Activated B cell treated with CpG ODN at 0.5 μM for 24 hours (primary cell): ENCODE measurements at regions of chr11 and their contacts with region 1.

Region 1: GRCh38 chr11:62591448-62592145 is at the start of gene TUT1:
- DNase-seq: peak; percentile 83
- ATAC-seq: peak; percentile 85
- H3K4me3 Mint-ChIP-seq: peak within 1 kb of the TSS; percentile 97
- H3K27ac Mint-ChIP-seq: peak within 1 kb of the TSS; percentile 98
- H3K4me1 Mint-ChIP-seq: peaks cover 52% of the 10 kb centered on the region
- H3K27me3 Mint-ChIP-seq: no peaks in the 10 kb centered on the region
- CTCF ChIP-seq: no peak
- total RNA-seq, gene TUT1: 27.8 and 30.9 TPM in 2 replicates

Region 2: GRCh38 chr11:62242021-62242420 is 349.6 kb before region 1 on chr11 and contains the start of gene SCGB1D2:
- CTCF ChIA-PET with region 1: no interaction called
- POLR2A ChIA-PET with region 1: no interaction called
- intact Hi-C with region 1: no loop called
- DNase-seq: no peak
- ATAC-seq: no peak
- H3K4me3 Mint-ChIP-seq: no peak within 1 kb of the TSS
- H3K27ac Mint-ChIP-seq: no peak within 1 kb of the TSS
- H3K4me1 Mint-ChIP-seq: no peaks in the 10 kb centered on the region
- H3K27me3 Mint-ChIP-seq: peaks cover 29% of the 10 kb centered on the region
- CTCF ChIP-seq: no peak
- total RNA-seq, gene SCGB1D2: not detected in 2 replicates

Region 3: GRCh38 chr11:62427630-62428233 is 163.9 kb before region 1 on chr11:
- CTCF ChIA-PET with region 1: interaction called, 23 read pairs
- POLR2A ChIA-PET with region 1: interaction called, 13 read pairs
- intact Hi-C with region 1: loop called (anchors 1 kb)
- DNase-seq: no peak
- ATAC-seq: peak; percentile 23
- H3K4me3 Mint-ChIP-seq: peak overlapping the region; percentile 25
- H3K27ac Mint-ChIP-seq: peak overlapping the region; percentile 57
- H3K4me1 Mint-ChIP-seq: peaks cover 24% of the 10 kb centered on the region
- H3K27me3 Mint-ChIP-seq: peaks cover 2% of the 10 kb centered on the region
- CTCF ChIP-seq: no peak

Region 4: DNA sequence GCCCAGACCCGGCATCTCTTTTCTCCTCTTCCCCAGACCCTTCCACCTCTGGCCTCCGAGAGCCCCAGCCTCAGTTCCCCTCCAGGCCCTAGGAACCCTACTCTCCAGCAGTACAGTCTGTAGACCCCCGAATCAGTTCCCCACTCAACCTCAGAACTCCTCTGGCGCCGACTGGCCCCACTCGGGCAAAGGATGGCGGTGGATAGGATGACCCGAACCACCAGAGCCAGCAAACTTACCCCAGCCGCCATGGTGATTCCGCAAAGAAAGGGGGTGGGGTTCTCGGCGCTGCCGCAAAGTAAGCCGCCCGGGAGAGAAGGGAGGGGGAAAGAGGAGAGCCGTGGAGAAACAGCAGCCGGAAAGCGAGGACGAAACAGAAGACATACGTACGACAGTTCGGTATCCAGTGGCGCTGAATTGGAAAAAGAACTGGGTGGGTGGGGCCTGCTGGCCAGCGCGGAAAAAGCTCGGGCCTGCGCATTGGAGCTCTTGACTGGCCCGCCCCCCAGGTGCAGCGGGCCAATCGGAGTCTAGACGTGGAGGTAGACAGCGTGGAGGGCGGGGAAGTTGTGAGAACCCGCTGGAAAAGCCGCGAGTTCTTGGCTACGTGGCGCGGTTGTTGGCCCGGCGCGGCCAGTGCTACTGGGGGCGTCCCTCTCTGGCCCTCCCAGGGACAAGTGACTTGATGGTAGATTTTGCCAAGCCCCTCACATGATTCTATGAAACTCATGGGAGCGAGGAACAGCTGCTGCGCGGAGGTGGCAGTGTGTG is 17.8 kb before region 1 on chr11 and contains the start of gene EEF1G:
- CTCF ChIA-PET with region 1: interaction called, 5 read pairs
- POLR2A ChIA-PET with region 1: interaction called, 121 read pairs
- intact Hi-C with region 1: loop called (anchors 1 kb)
- DNase-seq: peak; percentile 92
- ATAC-seq: peak; percentile 94
- H3K4me3 Mint-ChIP-seq: peak within 1 kb of the TSS; percentile 97
- H3K27ac Mint-ChIP-seq: peak within 1 kb of the TSS; percentile 94
- H3K4me1 Mint-ChIP-seq: peaks cover 51% of the 10 kb centered on the region
- H3K27me3 Mint-ChIP-seq: no peaks in the 10 kb centered on the region
- CTCF ChIP-seq: no peak
- total RNA-seq, gene EEF1G: 2,373 and 2,524 TPM in 2 replicates

Region 5: DNA sequence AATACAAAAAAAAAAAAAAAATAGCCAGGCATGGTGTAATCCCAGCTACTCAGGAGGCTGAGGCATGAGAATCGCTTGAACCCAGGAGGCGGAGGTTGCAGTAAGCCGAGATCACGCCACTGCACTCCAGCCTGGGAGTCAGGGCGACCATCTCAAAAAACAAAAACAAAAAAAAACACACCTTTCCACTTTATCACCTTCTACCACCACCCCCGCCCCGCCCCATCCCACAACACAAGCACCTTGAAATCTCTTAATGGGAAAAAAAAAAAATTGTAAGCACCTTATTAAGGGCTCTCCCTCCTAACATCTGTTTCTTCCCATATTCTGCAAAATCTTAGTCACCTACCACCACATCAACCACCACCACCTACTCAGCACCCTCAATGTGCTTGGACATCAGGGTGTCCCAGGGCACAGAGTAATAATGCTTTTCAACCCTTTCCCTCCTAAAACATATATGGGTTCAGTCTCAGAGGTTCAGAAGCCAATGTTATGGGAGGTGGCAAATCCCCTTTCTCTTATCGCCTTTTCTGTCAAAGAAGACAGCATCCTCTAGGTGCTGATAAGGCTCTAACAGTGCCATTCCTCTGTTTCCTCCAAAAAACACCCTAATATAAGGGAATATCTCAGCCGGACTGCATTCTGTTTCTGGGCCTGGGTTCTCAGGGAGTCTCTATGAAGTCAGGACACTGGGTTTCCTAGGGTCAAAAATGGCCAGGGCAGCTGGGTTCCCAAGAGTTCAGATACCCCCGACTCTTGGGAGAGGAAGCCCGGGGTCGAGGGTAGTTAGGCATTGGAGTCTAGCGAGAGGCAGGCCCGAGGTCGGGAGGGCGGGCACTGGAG is 60.8 kb after region 1 on chr11:
- CTCF ChIA-PET with region 1: interaction called, 4 read pairs
- POLR2A ChIA-PET with region 1: interaction called, 64 read pairs
- intact Hi-C with region 1: loop called (anchors 1 kb)
- DNase-seq: no peak
- ATAC-seq: no peak
- H3K4me3 Mint-ChIP-seq: peak overlapping the region; percentile 90
- H3K27ac Mint-ChIP-seq: peak overlapping the region; percentile 90
- H3K4me1 Mint-ChIP-seq: peaks cover 28% of the 10 kb centered on the region
- H3K27me3 Mint-ChIP-seq: no peaks in the 10 kb centered on the region
- CTCF ChIP-seq: no peak

Region 6: GRCh38 chr11:62694455-62695167 is 103.0 kb after region 1 on chr11:
- CTCF ChIA-PET with region 1: interaction called, 18 read pairs
- POLR2A ChIA-PET with region 1: interaction called, 7 read pairs
- intact Hi-C with region 1: loop called (anchors 1 kb)
- DNase-seq: peak; percentile 55
- ATAC-seq: peak; percentile 88
- H3K4me3 Mint-ChIP-seq: no peak overlapping the region
- H3K27ac Mint-ChIP-seq: no peak overlapping the region
- H3K4me1 Mint-ChIP-seq: peaks cover 5% of the 10 kb centered on the region
- H3K27me3 Mint-ChIP-seq: no peaks in the 10 kb centered on the region
- CTCF ChIP-seq: no peak

Region 7: DNA sequence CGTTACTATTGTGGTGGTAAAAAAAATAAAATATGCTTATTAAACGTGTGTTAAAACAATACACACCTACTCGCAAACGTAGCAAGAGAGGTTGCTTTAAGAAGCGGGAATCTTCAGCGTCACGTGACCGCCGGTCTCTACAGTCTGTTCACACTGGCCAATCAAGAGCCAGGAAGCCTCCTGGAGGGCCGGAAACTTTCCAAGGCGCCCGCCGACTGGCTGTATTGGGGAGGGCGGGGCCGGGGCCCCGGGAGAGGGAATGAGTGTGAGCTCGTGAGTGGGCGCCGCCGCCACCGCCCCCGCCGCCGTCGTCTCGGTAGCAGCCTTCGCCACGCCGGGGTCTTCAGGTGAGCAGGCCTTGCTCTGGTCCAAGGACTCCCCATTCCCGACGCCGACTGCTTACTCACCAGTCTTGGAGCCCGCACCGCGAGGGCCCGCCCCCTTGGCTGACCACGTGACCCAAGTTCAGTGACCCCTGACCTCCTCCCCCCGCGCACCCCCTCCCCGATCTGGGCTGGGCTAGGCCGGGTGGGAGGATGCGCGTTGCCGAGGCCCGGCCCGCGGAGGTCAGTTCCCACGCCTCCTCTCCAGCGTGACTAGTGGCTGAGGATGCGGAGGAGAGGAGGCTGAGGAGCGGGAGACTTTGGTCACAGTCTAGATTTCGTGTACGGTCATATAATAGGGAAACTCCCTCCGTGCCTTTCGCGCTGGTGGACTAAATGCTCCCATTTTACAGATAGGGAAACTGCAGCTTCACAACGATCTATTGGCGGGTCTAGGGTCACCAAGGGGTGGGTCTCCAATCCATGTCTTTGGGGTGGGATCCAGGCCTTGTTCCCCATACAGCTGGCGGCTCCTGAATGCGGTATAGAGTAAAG is 179.8 kb after region 1 on chr11 and contains the start of gene TAF6L:
- CTCF ChIA-PET with region 1: interaction called, 3 read pairs
- POLR2A ChIA-PET with region 1: interaction called, 20 read pairs
- intact Hi-C with region 1: no loop called
- DNase-seq: peak; percentile 81
- ATAC-seq: peak; percentile 88
- H3K4me3 Mint-ChIP-seq: peak within 1 kb of the TSS; percentile 92
- H3K27ac Mint-ChIP-seq: peak within 1 kb of the TSS; percentile 94
- H3K4me1 Mint-ChIP-seq: peaks cover 28% of the 10 kb centered on the region
- H3K27me3 Mint-ChIP-seq: no peaks in the 10 kb centered on the region
- CTCF ChIP-seq: no peak
- total RNA-seq, gene TAF6L: 32.9 and 38.6 TPM in 2 replicates

Region 8: DNA sequence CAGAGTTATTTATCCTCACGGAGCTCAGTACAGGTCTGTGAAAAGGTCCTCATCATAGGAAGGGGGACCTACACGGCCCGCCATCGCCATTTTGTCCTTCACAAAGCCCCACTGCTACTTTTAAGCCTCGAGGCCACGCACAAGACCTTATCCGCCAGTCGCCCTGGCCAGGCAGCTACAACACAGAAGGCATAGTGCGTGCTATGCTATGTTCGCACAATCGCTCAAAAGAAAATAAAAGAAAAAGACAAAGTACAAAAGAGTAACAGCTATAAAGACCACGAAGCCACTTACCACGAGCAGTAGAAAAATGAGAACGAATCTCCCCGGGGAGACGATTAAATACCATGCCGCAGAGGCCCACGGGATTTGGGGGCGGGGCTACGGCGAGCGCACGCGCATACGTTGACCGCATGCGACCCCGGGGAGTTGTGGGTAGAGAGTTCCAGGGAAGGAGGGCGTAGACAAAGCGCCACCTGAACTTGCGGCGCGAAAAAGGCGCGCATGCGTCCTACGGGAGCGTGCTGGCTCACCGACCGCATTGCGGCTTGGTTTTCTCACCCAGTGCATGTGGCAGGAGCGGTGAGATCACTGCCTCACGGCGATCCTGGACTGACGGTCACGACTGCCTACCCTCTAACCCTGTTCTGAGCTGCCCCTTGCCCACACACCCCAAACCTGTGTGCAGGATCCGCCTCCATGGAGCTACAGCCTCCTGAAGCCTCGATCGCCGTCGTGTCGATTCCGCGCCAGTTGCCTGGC is 264.2 kb after region 1 on chr11:
- CTCF ChIA-PET with region 1: interaction called, 3 read pairs
- POLR2A ChIA-PET with region 1: interaction called, 39 read pairs
- intact Hi-C with region 1: loop called (anchors 5 kb)
- DNase-seq: peak; percentile 99
- ATAC-seq: peak; percentile 89
- H3K4me3 Mint-ChIP-seq: peak overlapping the region; percentile 99
- H3K27ac Mint-ChIP-seq: peak overlapping the region; percentile 96
- H3K4me1 Mint-ChIP-seq: peaks cover 61% of the 10 kb centered on the region
- H3K27me3 Mint-ChIP-seq: no peaks in the 10 kb centered on the region
- CTCF ChIP-seq: no peak